ENCODE measurements at regions of chr4 and their contacts with region 1.

Region 1: GRCh38 chr4:150280081-150280895 is 202.0 kb downstream of the DCLK2 start:
- DNase-seq: peak; percentile 40
- H3K4me3 ChIP-seq: no peak overlapping the region
- H3K27ac ChIP-seq: no peak overlapping the region
- H3K4me1 ChIP-seq: peaks cover 6% of the 10 kb centered on the region
- H3K27me3 ChIP-seq: no peaks in the 10 kb centered on the region
- CTCF ChIP-seq: no peak
- POLR2A ChIP-seq: no peak

Region 2: GRCh38 chr4:149719806-149720205 is 560.5 kb before region 1 on chr4:
- CTCF ChIA-PET with region 1: no interaction called
- POLR2A ChIA-PET with region 1: no interaction called
- dilution Hi-C with region 1: no loop called
- intact Hi-C with region 1: no loop called
- DNase-seq: no peak
- H3K4me3 ChIP-seq: no peak overlapping the region
- H3K27ac ChIP-seq: no peak overlapping the region
- H3K4me1 ChIP-seq: no peaks in the 10 kb centered on the region
- H3K27me3 ChIP-seq: no peaks in the 10 kb centered on the region
- CTCF ChIP-seq: no peak
- POLR2A ChIP-seq: no peak

Region 3: GRCh38 chr4:151004222-151004621 is 723.9 kb after region 1 on chr4:
- CTCF ChIA-PET with region 1: no interaction called
- POLR2A ChIA-PET with region 1: interaction called, 11 read pairs
- dilution Hi-C with region 1: no loop called
- intact Hi-C with region 1: no loop called
- DNase-seq: peak; percentile 77
- H3K4me3 ChIP-seq: no peak overlapping the region
- H3K27ac ChIP-seq: peak overlapping the region; percentile 34
- H3K4me1 ChIP-seq: peaks cover 6% of the 10 kb centered on the region
- H3K27me3 ChIP-seq: no peaks in the 10 kb centered on the region
- CTCF ChIP-seq: no peak
- POLR2A ChIP-seq: no peak